Left colon (tissue), 2 donors: ENCODE measurements at regions of chr2 and their contacts with region 1.

Region 1: DNA sequence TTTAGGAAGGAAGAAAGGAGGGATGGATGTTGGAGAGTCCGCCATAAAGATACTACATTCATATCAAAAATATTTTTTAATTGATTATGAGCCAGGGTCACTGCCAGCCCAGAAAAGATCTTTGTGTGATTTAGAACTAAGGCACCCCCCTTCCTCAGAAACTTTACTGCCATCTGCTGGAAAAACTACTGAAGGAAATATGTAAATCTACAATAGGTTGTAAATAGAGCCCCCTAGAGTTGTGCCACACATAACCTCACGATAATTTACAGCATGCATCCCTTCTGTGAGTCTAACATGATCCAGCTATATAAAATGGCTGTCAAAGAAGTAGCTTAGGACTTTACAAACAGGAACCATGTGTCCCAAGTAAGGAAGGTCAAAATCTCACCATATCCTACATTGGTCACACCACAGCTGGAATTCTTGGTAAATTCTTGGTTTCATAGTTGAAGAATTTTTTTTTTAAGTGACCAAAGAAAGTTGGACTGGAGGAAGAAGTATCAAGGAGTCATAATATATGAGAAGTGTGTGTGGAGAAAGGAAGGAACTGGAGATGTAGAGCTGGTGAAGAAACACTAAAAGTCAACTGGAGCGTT is 152.5 kb downstream of the CYP26B1 start:
- DNase-seq: no peak
- ATAC-seq: no peak

Region 2: GRCh38 chr2:71558300-71559051 is 436.7 kb before region 1 on chr2:
- intact Hi-C with region 1: loop called in 1 of 2 experiments (anchors 10 kb)
- DNase-seq: no peak
- ATAC-seq: no peak

Region 3: DNA sequence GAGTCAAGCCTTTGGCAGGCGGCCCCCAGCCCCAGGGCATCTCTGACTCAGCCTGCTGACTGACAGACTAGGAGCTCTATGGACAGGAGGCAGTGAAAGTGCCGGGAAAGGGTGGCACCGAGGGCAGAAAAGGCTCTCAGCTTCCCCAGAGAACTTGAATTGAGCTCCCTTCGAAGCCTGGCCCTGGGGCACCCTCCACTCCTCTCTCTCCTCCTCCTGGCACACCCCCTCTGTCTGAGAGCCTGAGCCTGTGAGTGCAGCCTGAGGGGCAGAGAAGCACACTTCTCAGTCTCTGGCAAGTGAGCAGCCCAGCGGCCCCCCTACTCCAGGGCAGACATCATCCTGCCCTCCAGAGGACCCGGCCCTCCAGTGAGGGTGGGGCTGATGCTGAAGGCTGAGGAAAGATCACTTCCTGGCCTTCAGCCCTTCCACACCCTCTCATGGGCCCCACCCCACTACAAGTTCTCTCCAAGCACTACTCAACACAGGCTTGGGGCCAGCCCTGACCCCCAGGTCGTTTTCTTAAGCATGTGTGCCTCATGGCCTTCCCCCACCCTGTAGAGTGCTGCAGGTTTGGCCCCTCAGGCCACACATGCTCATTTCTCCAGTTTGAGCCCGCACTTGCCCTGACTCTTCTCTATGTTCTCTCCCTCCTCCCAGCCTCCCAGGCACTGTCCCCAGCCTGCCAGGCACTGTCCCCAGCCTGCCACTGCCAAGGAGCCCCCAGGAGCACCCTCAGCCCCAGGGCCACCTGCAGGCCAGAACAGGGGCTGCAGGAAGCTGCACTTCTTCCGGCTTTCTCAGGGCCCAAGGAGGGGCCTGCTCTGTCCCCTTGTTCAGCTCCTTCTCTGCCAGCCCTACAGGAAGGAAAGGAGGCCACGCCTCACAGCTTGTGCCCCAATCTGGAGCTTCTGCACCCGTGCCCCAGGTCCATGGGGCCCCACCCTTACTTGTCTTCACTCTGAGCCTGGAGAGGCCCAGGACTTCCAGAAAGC is 120.7 kb after region 1 on chr2:
- intact Hi-C with region 1: no loop called
- DNase-seq: no peak
- ATAC-seq: peak; percentile 27